ENCODE measurements at regions of chr11 and their contacts with region 1.

Region 1: DNA sequence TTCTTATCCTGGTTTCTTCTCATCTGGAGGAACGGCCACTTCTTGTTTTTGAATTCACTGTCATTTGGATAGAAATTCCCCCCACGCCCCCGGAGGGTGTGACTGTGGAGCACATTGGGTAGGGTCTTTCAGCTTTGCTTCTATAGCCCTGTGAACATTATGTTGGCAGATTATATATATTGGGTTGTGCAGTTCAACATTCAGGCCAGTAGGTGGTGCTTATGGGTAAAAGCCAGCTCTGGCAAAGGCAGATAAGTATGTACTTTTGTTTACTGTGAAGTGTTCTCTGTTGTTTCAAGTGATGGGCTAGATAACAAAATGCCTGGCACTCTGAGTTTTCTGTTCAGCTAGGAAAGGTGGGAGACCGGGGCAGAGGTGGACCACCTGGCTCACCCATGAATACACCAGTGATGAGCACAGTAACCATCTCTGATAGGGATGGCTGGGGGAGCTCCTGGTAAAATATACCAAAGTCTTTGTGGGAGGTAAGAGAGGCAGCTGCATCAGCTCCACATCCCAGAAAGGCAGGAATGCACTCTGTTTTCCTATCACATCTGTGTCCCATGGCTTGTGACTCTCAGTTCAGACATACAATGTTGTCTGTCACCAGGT is 1348.2 kb upstream of the RAG2 start:
- DNase-seq: peak; percentile 15
- H3K4me3 Mint-ChIP-seq: no peak overlapping the region
- H3K27ac Mint-ChIP-seq: no peak overlapping the region
- H3K4me1 Mint-ChIP-seq: no peaks in the 10 kb centered on the region
- H3K27me3 Mint-ChIP-seq: no peaks in the 10 kb centered on the region

Region 2: DNA sequence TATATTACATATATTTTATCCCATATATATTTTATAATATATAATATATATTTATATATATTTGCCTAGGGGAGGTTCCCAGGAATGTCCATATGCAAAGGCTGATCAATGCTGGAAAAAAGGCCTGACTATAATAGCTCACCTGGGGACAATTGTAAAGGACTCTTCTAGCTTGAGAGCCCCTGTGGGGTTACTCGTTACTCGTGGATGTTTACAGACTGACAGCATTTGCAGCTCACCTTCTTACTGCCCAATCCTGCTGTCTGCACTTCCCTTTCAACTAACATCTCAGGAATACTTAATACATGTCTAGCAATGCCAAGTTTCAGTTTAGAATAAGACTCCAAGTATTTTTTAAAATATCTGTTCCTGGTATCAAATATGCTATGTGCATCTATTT is 17.2 kb after region 1 on chr11:
- CTCF ChIA-PET with region 1: interaction called, 4 read pairs
- intact Hi-C with region 1: loop called (anchors 1 kb)
- DNase-seq: no peak
- H3K4me3 Mint-ChIP-seq: no peak overlapping the region
- H3K27ac Mint-ChIP-seq: no peak overlapping the region
- H3K4me1 Mint-ChIP-seq: no peaks in the 10 kb centered on the region
- H3K27me3 Mint-ChIP-seq: no peaks in the 10 kb centered on the region

Region 3: GRCh38 chr11:38315141-38315540 is 368.9 kb after region 1 on chr11:
- CTCF ChIA-PET with region 1: no interaction called
- intact Hi-C with region 1: no loop called
- DNase-seq: no peak
- H3K4me3 Mint-ChIP-seq: no peak overlapping the region
- H3K27ac Mint-ChIP-seq: no peak overlapping the region
- H3K4me1 Mint-ChIP-seq: no peaks in the 10 kb centered on the region
- H3K27me3 Mint-ChIP-seq: no peaks in the 10 kb centered on the region

Region 4: GRCh38 chr11:39374963-39375698 is 1428.9 kb after region 1 on chr11:
- CTCF ChIA-PET with region 1: no interaction called
- intact Hi-C with region 1: loop called (anchors 10 kb)
- DNase-seq: no peak
- H3K4me3 Mint-ChIP-seq: no peak overlapping the region
- H3K27ac Mint-ChIP-seq: no peak overlapping the region
- H3K4me1 Mint-ChIP-seq: peaks cover 20% of the 10 kb centered on the region
- H3K27me3 Mint-ChIP-seq: no peaks in the 10 kb centered on the region

Measured in activated naive CD4-positive, alpha-beta T cell treated with anti-CD3 and anti-CD28 coated beads for 36 hours (primary cell).